ENCODE measurements at regions of chr3 and their contacts with region 1.

Region 1: GRCh38 chr3:129490242-129491045 is 38.0 kb upstream of the RHO start:
- DNase-seq: peak; percentile 59
- ATAC-seq: peak; percentile 99
- H3K4me3 Mint-ChIP-seq: no peak overlapping the region
- H3K27ac Mint-ChIP-seq: no peak overlapping the region
- H3K4me1 Mint-ChIP-seq: no peaks in the 10 kb centered on the region
- H3K27me3 Mint-ChIP-seq: no peaks in the 10 kb centered on the region
- CTCF ChIP-seq: peak; percentile 76

Region 2: GRCh38 chr3:129611812-129612533 is 121.5 kb after region 1 on chr3:
- CTCF ChIA-PET with region 1: no interaction called
- POLR2A ChIA-PET with region 1: no interaction called
- intact Hi-C with region 1: loop called (anchors 10 kb)
- DNase-seq: no peak
- ATAC-seq: no peak
- H3K4me3 Mint-ChIP-seq: no peak overlapping the region
- H3K27ac Mint-ChIP-seq: no peak overlapping the region
- H3K4me1 Mint-ChIP-seq: no peaks in the 10 kb centered on the region
- H3K27me3 Mint-ChIP-seq: peaks cover 14% of the 10 kb centered on the region
- CTCF ChIP-seq: no peak

Region 3: DNA sequence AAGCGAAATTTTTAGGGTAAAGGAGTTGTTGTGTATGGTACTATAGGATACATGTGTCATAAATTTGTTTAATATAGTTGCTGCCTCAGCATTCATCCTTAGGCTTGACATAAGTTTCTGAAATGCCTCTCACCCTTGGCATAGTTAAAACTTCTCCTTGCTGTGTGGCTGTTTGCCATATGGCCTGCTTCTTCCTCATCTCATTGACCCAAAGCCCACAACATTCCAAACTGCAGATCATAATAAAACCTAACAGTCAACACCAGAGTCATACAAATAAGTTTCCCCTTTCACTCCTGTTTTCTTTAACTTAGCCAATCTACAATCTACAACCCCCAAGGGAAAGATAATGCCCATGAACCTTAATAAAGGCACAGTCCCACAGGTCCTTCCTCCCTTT is 266.4 kb after region 1 on chr3:
- CTCF ChIA-PET with region 1: no interaction called
- POLR2A ChIA-PET with region 1: no interaction called
- intact Hi-C with region 1: no loop called
- DNase-seq: no peak
- ATAC-seq: no peak
- H3K4me3 Mint-ChIP-seq: no peak overlapping the region
- H3K27ac Mint-ChIP-seq: no peak overlapping the region
- H3K4me1 Mint-ChIP-seq: no peaks in the 10 kb centered on the region
- H3K27me3 Mint-ChIP-seq: no peaks in the 10 kb centered on the region
- CTCF ChIP-seq: no peak

Region 4: DNA sequence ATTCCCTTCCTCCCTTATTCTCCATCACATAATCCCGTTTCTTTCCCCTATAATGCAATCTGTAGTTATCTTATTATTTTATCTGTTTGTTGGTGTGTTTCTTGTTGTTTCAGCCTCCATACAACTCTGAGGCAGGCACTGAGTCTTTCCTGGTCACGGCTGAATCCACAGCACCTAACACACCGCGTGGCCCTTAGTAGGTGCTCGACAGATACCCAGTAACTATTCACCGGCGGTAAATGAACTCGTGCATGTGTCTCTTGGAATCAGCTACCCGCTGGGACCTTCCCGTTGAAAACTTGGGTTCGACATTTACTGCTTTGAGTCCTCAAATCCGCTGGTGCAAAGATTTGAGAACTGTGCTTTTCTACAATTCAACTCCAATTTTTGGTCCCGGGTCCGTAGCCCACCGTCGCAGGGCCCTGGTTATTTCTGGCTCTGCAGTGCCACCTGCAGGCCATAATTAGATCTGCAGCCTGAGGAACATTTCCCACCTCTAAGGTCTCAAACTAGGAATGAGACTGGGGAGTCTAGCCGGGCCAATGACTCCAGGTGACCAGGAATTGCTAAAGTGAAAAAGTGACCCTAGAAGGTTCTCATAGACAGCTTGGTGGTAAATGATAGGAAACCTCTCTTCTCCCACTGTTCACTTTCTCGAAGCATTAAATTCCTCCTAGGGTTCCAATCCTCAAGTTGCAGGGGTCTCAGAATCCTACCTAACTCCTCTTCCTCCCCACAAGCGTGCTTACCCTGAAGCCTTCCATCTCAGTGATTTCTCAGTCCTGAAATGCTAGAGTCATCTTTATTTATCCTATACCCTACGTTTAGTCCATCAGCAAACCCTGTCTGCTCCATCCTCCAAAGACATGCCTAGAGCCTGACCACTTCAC is 444.0 kb after region 1 on chr3:
- CTCF ChIA-PET with region 1: interaction called, 9 read pairs
- POLR2A ChIA-PET with region 1: no interaction called
- intact Hi-C with region 1: loop called (anchors 10 kb)
- DNase-seq: peak; percentile 48
- ATAC-seq: peak; percentile 61
- H3K4me3 Mint-ChIP-seq: no peak overlapping the region
- H3K27ac Mint-ChIP-seq: no peak overlapping the region
- H3K4me1 Mint-ChIP-seq: peaks cover 2% of the 10 kb centered on the region
- H3K27me3 Mint-ChIP-seq: no peaks in the 10 kb centered on the region
- CTCF ChIP-seq: peak; percentile 94

Measured in activated CD8-positive, alpha-beta T cell treated with anti-CD3 and anti-CD28 coated beads for 36 hours (primary cell).